Naive thymus-derived CD8-positive, alpha-beta T cell (primary cell): ENCODE measurements at regions of chr7 and their contacts with region 1.

Region 1: DNA sequence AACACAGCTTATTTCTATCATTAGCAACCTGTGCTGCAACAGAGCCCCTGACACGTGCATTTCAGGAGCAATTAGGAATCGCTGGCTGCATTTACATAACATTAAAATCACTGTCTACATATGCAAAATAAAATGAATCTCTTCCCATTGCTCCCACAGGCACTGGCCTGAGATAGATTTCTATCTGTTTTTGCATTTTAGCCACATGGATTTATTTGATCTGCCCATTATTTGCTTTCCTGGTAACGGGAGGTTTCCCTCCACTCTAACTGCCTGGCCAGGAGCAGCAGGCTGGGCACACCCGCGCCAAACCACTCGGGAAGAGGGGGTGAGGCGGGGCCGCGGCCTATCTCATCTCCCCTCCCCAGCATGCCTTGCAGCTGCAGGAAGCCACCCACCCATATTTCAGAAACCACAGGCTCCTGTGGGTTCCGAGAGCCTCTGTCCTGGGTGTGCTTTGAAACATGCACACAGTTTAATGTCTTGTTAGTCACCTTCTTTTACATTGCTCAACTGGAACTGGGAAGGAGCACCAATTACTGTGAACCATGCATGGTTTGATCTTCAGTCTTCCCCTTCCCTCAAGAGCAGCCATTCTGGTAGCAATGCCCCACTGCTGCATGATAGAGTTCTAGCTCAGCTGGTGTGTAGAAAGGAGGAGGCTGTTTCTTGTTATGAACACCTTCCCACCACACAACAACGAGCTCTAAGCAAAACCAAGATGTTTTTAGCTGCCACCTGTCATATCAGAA is 37.7 kb upstream of the IKZF1 start:
- DNase-seq: peak; percentile 44 to 90 (median 76)
- ATAC-seq: peak; percentile 79 to 87
- H3K4me3 Mint-ChIP-seq: peak overlapping the region; percentile 77 to 91 (median 86)
- H3K27ac Mint-ChIP-seq: peak overlapping the region; percentile 88 to 99 (median 96)
- H3K4me1 Mint-ChIP-seq: peaks cover 60 to 99% (median 91%) of the 10 kb centered on the region in 4 donors
- H3K27me3 Mint-ChIP-seq: no peaks in the 10 kb centered on the region

Region 2: GRCh38 chr7:50196719-50197118 is 70.1 kb before region 1 on chr7:
- POLR2A ChIA-PET with region 1: no interaction called
- DNase-seq: no peak
- ATAC-seq: no peak
- H3K4me3 Mint-ChIP-seq: no peak overlapping the region
- H3K27ac Mint-ChIP-seq: no peak overlapping the region
- H3K4me1 Mint-ChIP-seq: peaks cover 0 to 9% (median 6%) of the 10 kb centered on the region in 4 donors
- H3K27me3 Mint-ChIP-seq: no peaks in the 10 kb centered on the region

Region 3: GRCh38 chr7:50212666-50213621 is 53.9 kb before region 1 on chr7:
- POLR2A ChIA-PET with region 1: interaction called, 78 read pairs
- DNase-seq: peak in 2 of 10 donors; percentile 31 to 43
- ATAC-seq: peak; percentile 57 to 68
- H3K4me3 Mint-ChIP-seq: peak overlapping the region; percentile 46 to 82 (median 66)
- H3K27ac Mint-ChIP-seq: peak overlapping the region; percentile 61 to 93 (median 84)
- H3K4me1 Mint-ChIP-seq: peaks cover 58 to 97% (median 95%) of the 10 kb centered on the region in 4 donors
- H3K27me3 Mint-ChIP-seq: no peaks in the 10 kb centered on the region

Region 4: GRCh38 chr7:50251765-50252164 is 15.0 kb before region 1 on chr7:
- POLR2A ChIA-PET with region 1: interaction called, 28 read pairs
- DNase-seq: no peak
- ATAC-seq: no peak
- H3K4me3 Mint-ChIP-seq: no peak overlapping the region
- H3K27ac Mint-ChIP-seq: peak overlapping the region in 3 of 10 donors; percentile 0 to 76 (median 48)
- H3K4me1 Mint-ChIP-seq: peaks cover 9 to 44% (median 26%) of the 10 kb centered on the region in 4 donors
- H3K27me3 Mint-ChIP-seq: no peaks in the 10 kb centered on the region

Region 5: DNA sequence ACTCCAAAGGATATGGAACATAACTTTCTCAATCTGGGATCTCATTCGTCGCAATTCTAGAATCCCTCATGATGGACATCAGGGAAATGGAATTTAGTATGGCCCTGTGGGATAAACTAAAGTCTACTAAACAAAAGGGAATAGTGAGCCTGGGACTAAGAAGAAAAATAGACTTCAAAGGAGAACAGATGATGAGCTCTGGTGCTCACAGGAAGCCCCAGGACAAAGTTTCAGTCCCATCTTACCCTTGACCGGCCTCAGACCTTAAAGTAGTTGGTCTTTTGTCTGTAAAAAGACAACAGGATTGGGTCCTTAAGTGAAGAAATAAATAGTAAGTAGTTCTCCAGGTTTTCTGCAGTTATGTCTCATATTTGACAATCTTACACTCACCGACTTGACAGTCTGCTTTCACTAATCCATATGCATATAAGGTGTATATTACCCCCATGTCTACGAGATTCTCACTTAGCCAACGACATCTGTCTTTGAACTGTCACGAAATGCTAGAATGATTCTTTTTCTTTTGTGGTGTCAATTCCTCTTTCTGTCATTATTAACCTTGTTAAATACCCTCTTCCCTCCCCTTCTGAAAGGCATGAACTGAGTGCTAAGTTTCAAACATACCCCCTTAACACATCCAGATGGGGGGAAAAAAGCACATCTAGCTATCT is 26.8 kb after region 1 on chr7:
- POLR2A ChIA-PET with region 1: interaction called, 25 read pairs
- DNase-seq: no peak
- ATAC-seq: no peak
- H3K4me3 Mint-ChIP-seq: no peak overlapping the region
- H3K27ac Mint-ChIP-seq: peak overlapping the region in 4 of 10 donors; percentile 22 to 54 (median 32)
- H3K4me1 Mint-ChIP-seq: peaks cover 23 to 53% (median 42%) of the 10 kb centered on the region in 4 donors
- H3K27me3 Mint-ChIP-seq: no peaks in the 10 kb centered on the region

Region 6: DNA sequence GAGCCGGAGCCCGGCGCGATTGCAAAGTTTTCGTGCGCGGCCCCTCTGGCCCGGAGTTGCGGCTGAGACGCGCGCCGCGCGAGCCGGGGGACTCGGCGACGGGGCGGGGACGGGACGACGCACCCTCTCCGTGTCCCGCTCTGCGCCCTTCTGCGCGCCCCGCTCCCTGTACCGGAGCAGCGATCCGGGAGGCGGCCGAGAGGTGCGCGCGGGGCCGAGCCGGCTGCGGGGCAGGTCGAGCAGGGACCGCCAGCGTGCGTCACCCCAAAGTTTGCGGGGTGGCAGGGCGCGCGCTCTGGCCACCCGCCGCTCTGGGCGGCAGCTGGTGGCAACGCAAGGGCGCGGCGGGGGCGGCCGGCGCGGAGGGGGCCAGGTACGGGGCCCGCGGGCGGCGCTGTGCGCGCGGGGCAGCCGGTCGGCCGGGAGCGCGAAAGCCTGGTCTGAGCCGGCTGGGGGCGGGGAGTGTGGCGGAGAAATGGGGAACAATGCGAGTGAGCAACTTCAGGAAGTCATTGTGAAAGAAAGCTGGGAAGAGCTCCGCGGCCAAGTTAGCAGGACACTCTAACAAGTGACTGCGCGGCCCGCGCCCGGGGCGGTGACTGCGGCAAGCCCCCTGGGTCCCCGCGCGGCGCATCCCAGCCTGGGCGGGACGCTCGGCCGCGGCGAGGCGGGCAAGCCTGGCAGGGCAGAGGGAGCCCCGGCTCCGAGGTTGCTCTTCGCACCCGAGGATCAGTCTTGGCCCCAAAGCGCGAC is 37.5 kb after region 1 on chr7 and contains the start of gene IKZF1:
- POLR2A ChIA-PET with region 1: interaction called, 295 read pairs
- DNase-seq: peak in 8 of 10 donors; percentile 51 to 70 (median 61)
- ATAC-seq: peak; percentile 34 to 41
- H3K4me3 Mint-ChIP-seq: peak within 1 kb of the TSS; percentile 88 to 100 (median 100)
- H3K27ac Mint-ChIP-seq: peak within 1 kb of the TSS; percentile 89 to 100 (median 98)
- H3K4me1 Mint-ChIP-seq: peaks cover 31 to 68% (median 54%) of the 10 kb centered on the region in 4 donors
- H3K27me3 Mint-ChIP-seq: no peaks in the 10 kb centered on the region
- polyA plus RNA-seq, gene IKZF1: 145 to 257 (median 209) TPM

Region 7: GRCh38 chr7:50335795-50336754 is 69.3 kb after region 1 on chr7:
- POLR2A ChIA-PET with region 1: interaction called, 18 read pairs
- DNase-seq: peak in 9 of 10 donors; percentile 50 to 88 (median 60)
- ATAC-seq: peak; percentile 9 to 31
- H3K4me3 Mint-ChIP-seq: no peak overlapping the region
- H3K27ac Mint-ChIP-seq: no peak overlapping the region
- H3K4me1 Mint-ChIP-seq: peaks cover 0 to 45% (median 21%) of the 10 kb centered on the region in 4 donors
- H3K27me3 Mint-ChIP-seq: no peaks in the 10 kb centered on the region

Region 8: DNA sequence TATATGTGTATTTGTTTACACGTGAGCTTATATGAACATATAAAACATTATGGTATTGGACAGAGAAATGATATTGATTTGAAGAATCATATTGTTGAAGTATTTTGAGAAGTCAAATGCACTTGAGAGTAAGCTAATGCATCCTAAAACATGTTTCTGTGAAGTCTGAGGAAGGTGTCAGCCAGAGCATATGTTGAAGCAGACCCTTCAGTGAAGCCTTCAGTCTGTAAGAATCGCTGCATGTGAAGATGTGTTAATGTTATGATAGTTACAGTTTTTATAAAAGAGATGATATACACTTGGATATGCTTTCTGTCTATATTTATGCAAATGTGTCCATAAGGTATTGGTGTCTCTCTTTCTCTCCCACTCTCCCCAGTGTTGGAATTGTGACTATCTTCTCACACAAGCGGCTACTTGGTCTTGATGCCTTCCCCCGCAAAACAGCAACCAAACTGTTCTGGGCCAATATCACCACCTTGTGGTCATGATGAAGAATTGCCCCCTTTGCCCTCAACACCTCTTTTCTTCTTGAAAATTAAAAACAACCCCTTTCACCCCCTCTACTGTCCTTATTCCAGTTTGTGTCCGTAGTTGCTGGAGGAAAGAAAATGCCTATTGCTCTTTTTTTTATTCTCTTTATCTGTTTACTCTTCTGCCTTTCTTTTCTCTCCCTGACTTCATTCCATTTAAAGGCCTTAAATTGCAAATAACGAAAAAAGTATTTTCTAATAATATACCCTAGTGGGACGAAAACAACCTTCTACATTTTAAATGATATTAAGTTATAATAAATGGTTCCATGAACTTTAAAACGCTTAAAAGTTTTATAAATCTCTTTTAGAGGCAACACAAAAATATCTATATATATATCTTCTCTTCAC is 102.6 kb after region 1 on chr7:
- POLR2A ChIA-PET with region 1: interaction called, 39 read pairs
- DNase-seq: peak in 8 of 10 donors; percentile 49 to 86 (median 72)
- ATAC-seq: peak; percentile 44 to 66
- H3K4me3 Mint-ChIP-seq: peak overlapping the region in 9 of 10 donors; percentile 45 to 82 (median 61)
- H3K27ac Mint-ChIP-seq: peak overlapping the region in 9 of 10 donors; percentile 37 to 100 (median 89)
- H3K4me1 Mint-ChIP-seq: peaks cover 42 to 99% (median 96%) of the 10 kb centered on the region in 4 donors
- H3K27me3 Mint-ChIP-seq: no peaks in the 10 kb centered on the region